ENCODE measurements at regions of chr2 and their contacts with region 1.

Region 1: GRCh38 chr2:55779459-55780421 is 86.1 kb upstream of the PNPT1 start:
- DNase-seq: no peak
- ATAC-seq: no peak
- H3K4me3 ChIP-seq: no peak overlapping the region
- H3K27ac ChIP-seq: no peak overlapping the region
- H3K4me1 ChIP-seq: no peaks in the 10 kb centered on the region
- H3K27me3 ChIP-seq: no peaks in the 10 kb centered on the region

Region 2: DNA sequence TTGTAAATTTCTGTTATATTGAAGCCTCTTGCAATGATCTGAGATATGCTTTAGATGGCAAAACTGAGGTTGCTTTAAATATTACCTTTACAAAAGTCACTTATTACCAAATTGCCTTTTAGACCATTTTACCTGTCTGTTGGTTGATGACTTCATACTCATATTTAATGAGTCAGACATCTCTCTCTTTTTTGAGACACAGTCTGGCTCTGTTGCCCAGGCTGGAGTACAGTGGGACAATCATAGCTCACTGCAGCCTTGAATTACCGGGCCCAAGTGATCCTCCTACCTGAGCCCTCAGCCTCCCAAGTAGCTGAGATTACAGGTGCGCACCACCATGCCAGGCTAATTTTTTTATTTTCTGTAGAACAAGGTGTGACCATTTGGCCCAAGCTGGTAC is 150.8 kb before region 1 on chr2:
- intact Hi-C with region 1: no loop called
- DNase-seq: no peak
- ATAC-seq: no peak
- H3K4me3 ChIP-seq: no peak overlapping the region
- H3K27ac ChIP-seq: no peak overlapping the region
- H3K4me1 ChIP-seq: peaks cover 2% of the 10 kb centered on the region
- H3K27me3 ChIP-seq: no peaks in the 10 kb centered on the region

Region 3: GRCh38 chr2:55954306-55955035 is 174.7 kb after region 1 on chr2:
- intact Hi-C with region 1: loop called in 1 of 4 experiments (anchors 5 kb)
- DNase-seq: peak in 1 of 3 donors; percentile 58
- ATAC-seq: peak; percentile 47 to 61
- H3K4me3 ChIP-seq: no peak overlapping the region
- H3K27ac ChIP-seq: no peak overlapping the region
- H3K4me1 ChIP-seq: peaks cover 1% of the 10 kb centered on the region
- H3K27me3 ChIP-seq: no peaks in the 10 kb centered on the region

Measured in right cardiac atrium (tissue), 5 donors.